B cell (primary cell): ENCODE measurements at regions of chr10 and their contacts with region 1.

Region 1: DNA sequence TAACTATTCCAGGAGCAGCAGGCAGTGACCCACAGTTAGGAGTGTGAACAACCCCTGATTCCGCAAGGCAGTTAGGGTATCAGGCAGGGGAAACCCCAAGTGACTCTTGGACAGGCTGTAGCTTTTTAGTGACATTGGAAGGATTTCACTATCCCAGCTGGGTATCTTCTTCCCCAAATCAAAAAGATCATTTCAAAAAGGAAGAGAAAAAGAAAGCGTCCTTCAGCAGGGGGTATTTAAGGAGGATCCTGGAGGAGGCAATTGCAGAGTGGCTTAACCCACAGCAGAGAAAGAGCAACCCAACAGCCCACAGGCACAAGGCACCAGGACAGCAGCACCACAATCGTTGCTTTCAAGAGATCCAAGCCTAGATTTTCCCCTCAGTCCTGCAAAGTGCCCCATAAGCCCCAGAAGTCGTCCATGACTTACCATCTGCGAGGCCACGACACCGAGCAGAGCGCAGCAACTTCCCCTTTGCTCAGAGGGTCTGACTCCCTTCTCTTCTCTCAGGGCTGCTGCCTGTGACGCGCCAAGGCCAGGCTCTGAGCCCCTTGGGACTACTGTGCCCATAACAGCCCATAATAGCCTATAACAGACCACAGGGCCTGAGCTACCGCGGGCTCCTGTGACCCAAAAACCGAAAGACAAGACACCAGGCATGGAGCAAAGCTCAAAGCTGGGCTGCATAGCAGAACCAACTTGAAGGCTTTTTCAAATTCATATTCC is 19.8 kb downstream of the PIK3AP1 start:
- DNase-seq: peak; percentile 95
- ATAC-seq: peak; percentile 94
- H3K4me3 ChIP-seq: peak overlapping the region; percentile 75 to 97 (median 82)
- H3K4me3 Mint-ChIP-seq: peak overlapping the region; percentile 98
- H3K27ac ChIP-seq: peak overlapping the region; percentile 88 to 92
- H3K27ac Mint-ChIP-seq: peak overlapping the region; percentile 96
- H3K4me1 ChIP-seq: peaks cover 76 to 81% of the 10 kb centered on the region in 2 donors
- H3K4me1 Mint-ChIP-seq: peaks cover 77% of the 10 kb centered on the region
- H3K27me3 ChIP-seq: no peaks in the 10 kb centered on the region
- H3K27me3 Mint-ChIP-seq: no peaks in the 10 kb centered on the region
- CTCF ChIP-seq: no peak

Region 2: DNA sequence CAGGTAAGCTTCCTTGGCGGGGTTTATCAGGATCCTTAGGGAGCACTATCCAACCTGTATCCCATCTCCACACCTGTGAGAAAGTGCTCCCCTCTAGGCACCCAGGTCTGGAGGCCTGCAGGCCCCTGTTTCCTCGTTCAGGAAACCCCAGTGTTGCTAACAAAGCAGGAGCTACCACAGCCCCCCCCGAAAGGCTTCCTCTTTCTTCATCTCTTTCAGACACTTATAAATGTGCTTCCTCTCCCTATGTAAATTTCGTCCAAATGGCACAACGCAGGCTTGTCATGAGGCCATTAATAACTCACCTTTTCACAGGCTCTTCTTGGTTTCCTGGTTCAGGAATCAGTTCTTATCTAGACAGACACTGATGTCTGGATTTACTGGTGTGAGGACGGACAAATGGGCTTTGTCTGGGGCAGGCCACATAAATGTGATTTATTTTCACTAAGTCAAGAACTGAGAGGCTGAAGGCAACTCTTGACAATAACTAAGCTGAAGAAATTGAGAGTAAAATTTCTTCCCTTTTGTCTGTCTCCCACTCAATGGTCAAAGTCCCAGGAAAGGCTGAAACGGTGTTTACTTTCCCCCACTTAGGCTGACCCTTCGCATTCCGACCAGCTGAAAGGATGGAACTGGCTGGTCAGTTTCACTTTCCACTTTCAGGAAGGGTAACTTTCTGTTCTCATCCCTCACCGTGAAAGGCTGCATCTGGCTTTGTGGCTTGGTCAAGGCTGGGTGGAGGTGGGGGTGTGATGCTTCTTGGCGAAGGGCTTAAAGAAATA is 27.0 kb before region 1 on chr10:
- CTCF ChIA-PET with region 1: interaction called, 5 read pairs
- POLR2A ChIA-PET with region 1: interaction called, 24 read pairs
- intact Hi-C with region 1: loop called (anchors 1 kb)
- DNase-seq: peak; percentile 90
- ATAC-seq: peak; percentile 82
- H3K4me3 ChIP-seq: peak overlapping the region; percentile 33 to 65 (median 46)
- H3K4me3 Mint-ChIP-seq: peak overlapping the region; percentile 87
- H3K27ac ChIP-seq: peak overlapping the region; percentile 97 to 99
- H3K27ac Mint-ChIP-seq: peak overlapping the region; percentile 98
- H3K4me1 ChIP-seq: peaks cover 93 to 100% of the 10 kb centered on the region in 2 donors
- H3K4me1 Mint-ChIP-seq: peaks cover 84% of the 10 kb centered on the region
- H3K27me3 ChIP-seq: no peaks in the 10 kb centered on the region
- H3K27me3 Mint-ChIP-seq: no peaks in the 10 kb centered on the region
- CTCF ChIP-seq: no peak

Region 3: DNA sequence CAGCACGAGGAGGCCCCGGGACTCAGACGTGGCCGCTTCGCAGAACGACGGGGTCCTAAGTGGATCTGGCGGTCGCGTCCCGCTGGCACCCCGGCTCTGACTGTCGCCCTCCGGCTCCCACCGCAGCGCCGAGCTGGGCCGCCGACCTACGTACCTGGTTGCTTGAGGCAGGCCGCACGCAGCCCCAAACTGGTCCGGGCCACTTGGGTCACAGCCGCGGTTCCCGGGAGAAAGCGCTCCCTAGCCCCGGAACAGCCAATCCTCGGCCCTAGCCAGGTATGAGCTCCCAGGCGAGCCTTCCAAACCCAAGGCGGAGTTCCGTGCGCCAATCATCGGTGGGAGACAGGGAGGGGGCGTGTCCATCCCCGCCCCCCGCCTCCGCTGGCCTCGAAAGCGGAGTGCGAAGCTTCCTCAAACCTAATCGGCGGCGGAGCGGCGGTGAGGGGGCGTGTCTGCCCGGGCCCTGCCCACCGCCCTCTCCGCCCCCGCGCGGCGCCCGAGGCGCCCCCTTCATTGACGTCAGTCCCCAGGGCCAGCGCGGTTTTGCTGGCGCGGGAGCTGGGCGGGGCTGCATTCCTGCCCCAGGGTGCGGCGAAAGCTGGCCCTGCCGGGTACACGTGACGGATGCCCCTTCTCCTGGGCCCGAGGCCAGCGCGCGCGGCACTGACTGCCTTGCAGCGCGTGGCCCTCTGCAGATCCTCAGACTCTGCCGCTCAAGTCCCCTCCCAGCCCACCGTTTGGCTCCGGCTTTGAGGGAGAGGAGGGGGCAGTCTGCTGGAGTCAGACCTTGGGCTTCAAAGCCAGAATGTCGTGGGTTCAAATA is 986.6 kb after region 1 on chr10 and contains the start of gene AVPI1:
- CTCF ChIA-PET with region 1: no interaction called
- POLR2A ChIA-PET with region 1: no interaction called
- intact Hi-C with region 1: no loop called
- DNase-seq: peak; percentile 98
- ATAC-seq: peak; percentile 94
- H3K4me3 ChIP-seq: peak within 1 kb of the TSS; percentile 34 to 80 (median 76)
- H3K4me3 Mint-ChIP-seq: peak within 1 kb of the TSS; percentile 90
- H3K27ac ChIP-seq: peak within 1 kb of the TSS; percentile 71 to 73
- H3K27ac Mint-ChIP-seq: peak within 1 kb of the TSS; percentile 79
- H3K4me1 ChIP-seq: peaks cover 4 to 15% of the 10 kb centered on the region in 2 donors
- H3K4me1 Mint-ChIP-seq: peaks cover 14% of the 10 kb centered on the region
- H3K27me3 ChIP-seq: peaks cover 0 to 5% (median 0%) of the 10 kb centered on the region in 4 experiments
- H3K27me3 Mint-ChIP-seq: no peaks in the 10 kb centered on the region
- CTCF ChIP-seq: no peak
- total RNA-seq, gene AVPI1: 3.4 and 3.9 TPM in 2 replicates